Activated CD4-positive, alpha-beta memory T cell treated with anti-CD3 and anti-CD28 coated beads, Interleukin-2, amount 10 ng/mL, durations not matched to agents 7 days and 5 days (primary cell): ENCODE measurements at regions of chr6 and their contacts with region 1.

Region 1: GRCh38 chr6:33700391-33701050 is 11.0 kb downstream of the UQCC2 start:
- DNase-seq: peak; percentile 84
- H3K4me3 Mint-ChIP-seq: no peak overlapping the region
- H3K27ac Mint-ChIP-seq: peak overlapping the region; percentile 58
- H3K4me1 Mint-ChIP-seq: peaks cover 55% of the 10 kb centered on the region
- H3K27me3 Mint-ChIP-seq: no peaks in the 10 kb centered on the region

Region 2: DNA sequence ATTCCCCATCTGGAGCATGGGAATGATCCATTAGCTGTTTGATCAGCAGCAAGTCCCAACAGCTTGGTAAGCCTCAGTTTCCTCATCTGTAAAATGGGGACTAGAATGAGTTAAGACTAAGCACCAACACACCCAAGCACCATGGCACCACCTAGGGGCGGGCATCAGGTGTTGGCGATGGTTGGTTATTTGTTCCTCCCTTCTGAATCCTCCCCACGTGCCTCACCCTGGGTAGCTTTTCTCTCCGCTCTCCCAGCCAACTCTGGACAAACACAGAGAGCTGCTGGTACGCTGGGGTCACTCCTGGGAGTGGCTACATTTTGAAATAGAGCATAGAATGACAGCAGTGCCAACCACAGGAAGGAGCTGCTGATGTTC is 92.7 kb before region 1 on chr6:
- CTCF ChIA-PET with region 1: interaction called, 16 read pairs
- POLR2A ChIA-PET with region 1: no interaction called
- DNase-seq: peak; percentile 67
- H3K4me3 Mint-ChIP-seq: no peak overlapping the region
- H3K27ac Mint-ChIP-seq: no peak overlapping the region
- H3K4me1 Mint-ChIP-seq: peaks cover 6% of the 10 kb centered on the region
- H3K27me3 Mint-ChIP-seq: peaks cover 16% of the 10 kb centered on the region

Region 3: GRCh38 chr6:33683051-33683571 is 17.4 kb before region 1 on chr6:
- CTCF ChIA-PET with region 1: interaction called, 16 read pairs
- POLR2A ChIA-PET with region 1: interaction called, 11 read pairs
- DNase-seq: peak; percentile 58
- H3K4me3 Mint-ChIP-seq: no peak overlapping the region
- H3K27ac Mint-ChIP-seq: peak overlapping the region; percentile 75
- H3K4me1 Mint-ChIP-seq: peaks cover 33% of the 10 kb centered on the region
- H3K27me3 Mint-ChIP-seq: no peaks in the 10 kb centered on the region

Region 4: GRCh38 chr6:33761922-33762629 is 61.6 kb after region 1 on chr6:
- CTCF ChIA-PET with region 1: no interaction called
- POLR2A ChIA-PET with region 1: no interaction called
- DNase-seq: peak; percentile 59
- H3K4me3 Mint-ChIP-seq: no peak overlapping the region
- H3K27ac Mint-ChIP-seq: no peak overlapping the region
- H3K4me1 Mint-ChIP-seq: no peaks in the 10 kb centered on the region
- H3K27me3 Mint-ChIP-seq: no peaks in the 10 kb centered on the region